ENCODE measurements at regions of chr11 and their contacts with region 1.

Region 1: DNA sequence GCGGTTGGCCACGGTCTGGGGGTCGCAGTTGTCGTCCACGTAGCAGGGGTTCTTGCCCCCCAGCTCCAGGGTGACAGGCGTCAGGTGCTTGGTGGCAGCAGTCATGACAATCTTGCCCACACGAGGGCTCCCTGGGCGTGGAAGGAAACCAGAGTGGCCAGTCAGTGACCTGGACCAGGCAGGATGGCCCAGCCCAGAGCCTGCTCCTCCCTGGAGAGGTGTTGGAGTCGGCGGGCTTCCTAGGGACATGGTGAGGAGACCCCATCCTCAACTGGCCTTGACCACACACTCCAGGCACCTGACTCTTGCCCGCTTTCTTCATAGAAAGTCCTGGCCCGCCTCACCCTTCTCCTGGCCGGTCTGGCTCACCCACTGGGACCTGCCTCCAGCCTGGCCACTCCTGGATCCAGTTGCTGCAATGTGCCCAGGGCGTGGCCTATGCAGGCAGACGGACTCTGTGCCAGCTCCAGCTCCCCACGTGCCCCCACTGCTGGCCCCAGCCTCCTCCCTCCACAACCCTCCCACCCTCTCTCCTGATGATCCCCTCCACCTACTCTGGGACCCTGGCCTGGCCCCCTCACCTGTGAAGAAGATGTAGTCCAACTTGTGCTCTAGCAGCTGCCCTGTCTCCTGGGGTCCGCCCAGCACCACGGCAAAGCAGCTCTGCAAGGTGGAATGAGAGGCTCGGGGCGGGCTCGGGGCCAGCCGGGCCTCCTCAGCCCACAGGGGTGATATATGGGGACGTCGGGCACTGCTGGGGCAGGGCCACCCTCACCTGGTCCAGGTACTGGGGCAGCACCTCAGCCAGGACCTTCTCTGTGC is 8.7 kb downstream of the ALDH3B2 start:
- DNase-seq: no peak
- ATAC-seq: peak; percentile 78
- H3K4me3 ChIP-seq: no peak overlapping the region
- H3K27ac ChIP-seq: no peak overlapping the region
- H3K4me1 ChIP-seq: no peaks in the 10 kb centered on the region
- H3K27me3 ChIP-seq: no peaks in the 10 kb centered on the region
- CTCF ChIP-seq: no peak; the same call in 1 of the 2 replicates

Region 2: DNA sequence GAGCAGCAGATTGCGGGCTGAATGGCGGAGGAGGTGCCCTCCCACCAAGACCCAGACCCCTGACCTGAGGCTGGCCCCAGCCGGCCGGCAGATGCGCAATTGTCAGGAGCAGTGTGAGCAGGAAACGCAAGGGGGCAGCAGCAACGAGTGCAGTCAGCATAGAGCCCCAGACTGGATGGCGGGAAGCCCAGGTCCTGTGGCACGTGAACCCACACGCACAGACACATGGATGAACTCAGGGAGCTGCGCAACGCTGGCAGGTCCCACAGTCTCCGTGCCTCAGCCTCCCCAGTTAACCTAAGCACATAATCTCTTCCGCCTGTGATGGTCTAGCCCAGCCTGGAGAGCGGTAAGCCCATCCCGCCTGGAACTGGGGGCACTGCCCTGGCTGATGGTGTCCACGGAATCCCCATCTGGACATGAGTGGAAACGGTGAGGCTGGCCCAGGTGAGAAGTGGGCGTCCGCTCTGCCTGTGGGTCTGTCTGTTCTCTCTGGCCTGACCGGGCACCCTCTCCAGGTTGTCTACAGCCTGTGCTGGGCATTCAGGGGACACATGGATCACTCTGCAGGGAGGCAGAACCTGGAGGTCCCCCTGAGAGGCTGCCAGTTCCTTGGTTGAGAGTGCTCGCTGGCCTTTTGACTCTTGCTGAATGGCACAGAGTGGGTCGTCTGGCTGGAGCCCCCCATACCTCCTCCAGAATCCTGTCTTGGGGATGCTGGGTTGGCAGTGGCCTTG is 25.6 kb before region 1 on chr11:
- CTCF ChIA-PET with region 1: interaction called, 15 read pairs
- POLR2A ChIA-PET with region 1: no interaction called
- in situ Hi-C with region 1: no loop called
- intact Hi-C with region 1: no loop called
- DNase-seq: no peak
- ATAC-seq: peak; percentile 90
- H3K4me3 ChIP-seq: no peak overlapping the region
- H3K27ac ChIP-seq: no peak overlapping the region
- H3K4me1 ChIP-seq: no peaks in the 10 kb centered on the region
- H3K27me3 ChIP-seq: no peaks in the 10 kb centered on the region
- CTCF ChIP-seq: peak; percentile 96

Measured in Panc1 (cell line).